ENCODE measurements at regions of chr16 and their contacts with region 1.

Region 1: DNA sequence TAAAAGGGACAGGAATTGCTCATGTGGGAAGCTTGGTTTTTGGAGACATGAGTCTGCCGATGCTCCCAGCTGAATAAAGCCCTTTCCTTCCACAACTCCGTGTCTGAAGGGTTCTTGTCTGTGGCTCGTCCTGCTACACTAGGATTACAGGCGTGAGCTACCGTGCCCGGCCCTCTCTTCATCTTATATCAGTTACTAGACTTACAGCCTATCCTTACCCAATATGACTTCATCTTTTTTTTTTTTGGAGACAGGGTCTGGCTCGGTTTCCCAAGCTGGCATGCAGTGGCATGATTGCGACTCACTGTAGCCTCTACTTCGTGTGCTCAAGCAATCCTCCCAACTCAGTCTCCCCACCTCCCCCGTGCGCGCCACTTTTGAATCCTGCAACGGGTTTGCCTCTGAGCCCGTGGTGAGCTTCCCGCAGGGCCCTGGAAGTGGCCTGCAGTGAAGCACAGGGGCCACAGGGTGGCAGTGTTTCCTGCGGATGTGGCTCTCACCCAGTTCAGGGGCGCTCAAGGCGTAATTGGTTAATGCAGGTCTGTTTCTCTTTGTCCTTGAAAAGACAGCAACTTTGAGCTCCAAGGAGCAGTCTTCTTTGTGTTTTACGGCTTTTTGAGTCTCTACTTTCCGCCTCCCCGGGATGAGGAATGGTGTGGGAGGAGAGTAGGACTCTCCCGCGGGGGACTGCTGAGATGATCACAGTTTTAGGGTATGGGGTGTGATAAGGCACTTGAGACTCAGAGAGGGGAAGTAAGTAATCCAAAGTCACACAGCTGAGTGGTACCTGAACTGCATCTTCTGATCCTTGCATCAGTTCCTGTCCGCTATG is 22.7 kb upstream of the GPRC5B start:
- DNase-seq: peak; percentile 73
- H3K4me3 Mint-ChIP-seq: no peak overlapping the region
- H3K27ac Mint-ChIP-seq: no peak overlapping the region
- H3K4me1 Mint-ChIP-seq: no peaks in the 10 kb centered on the region
- H3K27me3 Mint-ChIP-seq: peaks cover 14% of the 10 kb centered on the region
- CTCF ChIP-seq: peak; percentile 96

Region 2: DNA sequence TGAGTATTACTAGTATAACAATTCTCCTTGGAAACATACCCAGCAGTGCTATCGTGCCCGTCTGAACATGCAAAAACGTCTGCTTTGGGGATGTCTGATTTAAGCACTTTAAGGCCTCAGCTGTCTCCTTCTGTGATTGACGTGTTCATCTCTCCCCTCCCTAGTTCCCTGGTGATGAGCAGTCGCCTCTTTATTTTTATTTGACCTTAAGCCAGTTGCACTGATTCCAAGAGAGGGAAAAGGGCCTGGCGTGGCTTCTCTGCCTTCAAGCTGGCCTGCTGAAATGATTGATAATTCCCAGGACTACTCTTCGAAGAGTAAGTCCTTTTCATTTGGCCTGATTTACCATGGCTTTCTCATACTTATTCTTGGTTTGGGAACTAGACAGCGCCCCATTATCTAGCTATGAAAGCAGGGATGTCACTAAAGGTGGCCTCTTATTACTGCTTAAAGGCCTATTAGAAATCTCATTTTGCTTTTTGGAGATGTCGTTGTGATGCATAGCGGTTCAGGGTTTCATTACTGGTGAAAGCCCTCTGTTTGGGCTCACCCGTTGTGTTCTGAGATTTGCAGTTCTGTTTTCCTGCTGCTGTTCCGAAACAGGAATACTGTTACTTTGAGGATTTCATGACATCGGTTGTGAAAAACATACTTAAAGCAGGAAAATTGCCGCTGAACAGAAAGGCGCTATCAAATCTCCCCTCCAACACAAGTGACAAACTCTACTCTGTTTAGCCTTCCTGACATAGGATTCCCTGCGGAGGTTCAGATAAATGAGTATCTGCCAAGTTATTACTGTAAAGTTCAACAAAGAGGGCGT is 123.8 kb before region 1 on chr16:
- CTCF ChIA-PET with region 1: no interaction called
- POLR2A ChIA-PET with region 1: no interaction called
- intact Hi-C with region 1: no loop called
- DNase-seq: no peak
- H3K4me3 Mint-ChIP-seq: no peak overlapping the region
- H3K27ac Mint-ChIP-seq: no peak overlapping the region
- H3K4me1 Mint-ChIP-seq: no peaks in the 10 kb centered on the region
- H3K27me3 Mint-ChIP-seq: no peaks in the 10 kb centered on the region
- CTCF ChIP-seq: no peak

Region 3: DNA sequence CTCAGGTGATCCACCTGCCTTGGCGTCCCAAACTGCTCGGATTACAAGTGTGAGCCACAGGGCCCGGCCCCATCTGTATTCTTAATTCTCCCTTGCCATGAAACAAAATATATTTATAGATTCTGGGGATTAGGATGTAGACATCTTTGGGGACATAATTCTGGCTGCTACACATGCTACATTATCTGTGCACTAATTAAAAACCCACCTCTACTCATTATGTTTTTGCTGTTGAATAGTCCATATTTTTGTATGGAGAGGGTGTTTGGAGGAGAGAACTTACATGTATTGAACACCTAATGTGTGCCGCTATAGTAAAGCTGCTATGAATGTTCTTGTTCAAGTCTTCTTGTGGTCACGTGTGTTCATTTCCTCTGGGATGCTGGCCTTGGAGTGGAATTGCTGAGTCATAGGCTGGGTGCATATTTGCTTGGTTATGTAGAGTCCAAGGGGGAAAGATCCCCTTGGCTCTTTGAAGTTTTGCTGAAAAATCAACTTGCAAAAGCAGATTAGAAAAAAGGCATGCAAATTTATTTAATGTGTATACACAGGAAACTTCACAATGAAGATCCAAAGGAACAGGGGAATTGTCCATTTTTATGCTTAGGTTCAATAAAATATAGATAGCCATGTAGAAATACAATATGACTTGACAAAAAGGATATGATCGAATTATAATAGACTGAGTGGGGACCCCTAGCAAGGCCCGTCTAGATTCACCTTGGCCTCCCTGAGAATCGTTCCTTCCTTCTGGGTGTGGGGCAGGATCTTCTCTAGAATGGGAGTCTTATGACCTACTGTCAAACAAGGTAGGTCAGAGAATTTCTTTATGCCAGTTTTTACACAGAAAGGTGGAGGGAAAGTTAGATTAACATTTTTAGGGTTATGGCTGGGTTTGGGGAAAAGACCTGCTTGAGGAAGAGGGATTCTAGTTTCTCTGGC is 19.3 kb after region 1 on chr16:
- CTCF ChIA-PET with region 1: interaction called, 23 read pairs
- POLR2A ChIA-PET with region 1: no interaction called
- intact Hi-C with region 1: no loop called
- DNase-seq: peak; percentile 52
- H3K4me3 Mint-ChIP-seq: no peak overlapping the region
- H3K27ac Mint-ChIP-seq: no peak overlapping the region
- H3K4me1 Mint-ChIP-seq: no peaks in the 10 kb centered on the region
- H3K27me3 Mint-ChIP-seq: peaks cover 2% of the 10 kb centered on the region
- CTCF ChIP-seq: no peak

Region 4: DNA sequence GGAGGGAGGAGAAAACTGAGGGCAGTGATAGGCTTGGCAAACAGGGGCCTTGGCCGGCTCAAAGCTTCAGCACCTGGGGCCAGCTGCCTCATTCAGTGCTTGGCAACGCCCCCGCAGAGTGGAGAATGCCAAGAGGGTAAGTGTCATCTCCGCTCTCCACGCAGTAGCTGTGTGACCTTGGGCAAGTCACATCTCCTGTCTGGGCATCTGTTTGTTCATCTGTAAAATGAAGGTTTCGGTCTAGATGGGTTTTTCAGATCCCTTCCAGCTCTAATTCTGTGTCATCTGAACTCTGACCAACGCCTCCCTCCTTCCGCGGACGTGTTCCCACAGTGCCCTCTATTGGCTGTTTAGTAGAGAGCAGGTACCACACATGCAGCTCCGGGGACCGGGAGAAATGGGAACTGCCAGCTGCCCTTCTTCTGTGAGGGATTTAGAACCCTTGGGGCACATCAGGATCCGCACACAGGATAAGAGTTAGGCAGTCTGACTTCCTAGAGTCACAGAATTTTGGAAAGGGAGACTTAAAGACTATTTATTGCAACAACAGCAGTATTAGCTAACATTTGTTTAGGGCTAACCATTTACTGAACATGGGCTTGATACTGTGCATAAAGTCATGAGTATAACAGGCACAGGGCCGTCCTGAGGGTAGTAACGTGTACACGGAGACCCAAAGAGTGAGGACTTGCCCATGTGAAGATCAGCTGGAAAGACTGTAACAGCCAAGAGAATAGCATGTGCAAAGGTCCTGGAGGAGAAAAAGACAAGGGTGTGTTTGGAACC is 393.1 kb after region 1 on chr16:
- CTCF ChIA-PET with region 1: interaction called, 456 read pairs
- POLR2A ChIA-PET with region 1: interaction called, 7 read pairs
- intact Hi-C with region 1: loop called (anchors 1 kb)
- DNase-seq: peak; percentile 68
- H3K4me3 Mint-ChIP-seq: no peak overlapping the region
- H3K27ac Mint-ChIP-seq: no peak overlapping the region
- H3K4me1 Mint-ChIP-seq: no peaks in the 10 kb centered on the region
- H3K27me3 Mint-ChIP-seq: peaks cover 54% of the 10 kb centered on the region
- CTCF ChIP-seq: peak; percentile 74

Region 5: GRCh38 chr16:20372701-20373100 is 465.3 kb after region 1 on chr16:
- CTCF ChIA-PET with region 1: interaction called, 537 read pairs
- POLR2A ChIA-PET with region 1: no interaction called
- intact Hi-C with region 1: no loop called
- DNase-seq: no peak
- H3K4me3 Mint-ChIP-seq: no peak overlapping the region
- H3K27ac Mint-ChIP-seq: no peak overlapping the region
- H3K4me1 Mint-ChIP-seq: no peaks in the 10 kb centered on the region
- H3K27me3 Mint-ChIP-seq: peaks cover 42% of the 10 kb centered on the region
- CTCF ChIP-seq: no peak

Region 6: DNA sequence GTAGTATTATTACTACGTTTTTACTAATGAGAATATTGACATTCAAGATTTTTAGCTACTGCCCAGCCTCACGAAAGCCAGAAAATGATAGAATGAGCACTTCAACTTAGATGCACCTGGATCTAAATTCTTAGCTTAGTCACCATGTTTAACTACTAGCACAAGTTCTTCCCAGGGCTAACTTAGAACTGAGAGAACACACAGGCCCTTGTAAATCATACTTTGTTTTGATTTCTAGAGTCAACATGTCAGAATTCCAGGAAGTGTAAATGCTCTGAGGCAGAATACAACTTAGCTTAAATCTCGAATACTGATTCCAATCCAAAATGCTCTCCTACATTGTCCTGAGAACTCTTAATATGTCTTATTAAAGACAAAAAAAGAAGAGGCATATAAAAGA is 796.9 kb after region 1 on chr16:
- CTCF ChIA-PET with region 1: interaction called, 3 read pairs
- POLR2A ChIA-PET with region 1: no interaction called
- intact Hi-C with region 1: loop called (anchors 10 kb)
- DNase-seq: no peak
- H3K4me3 Mint-ChIP-seq: no peak overlapping the region
- H3K27ac Mint-ChIP-seq: no peak overlapping the region
- H3K4me1 Mint-ChIP-seq: no peaks in the 10 kb centered on the region
- H3K27me3 Mint-ChIP-seq: peaks cover 20% of the 10 kb centered on the region
- CTCF ChIP-seq: no peak

Measured in MCF 10A (cell line).